Gastrocnemius medialis (tissue), 4 donors: ENCODE measurements at regions of chr17 and their contacts with region 1.

Region 1: DNA sequence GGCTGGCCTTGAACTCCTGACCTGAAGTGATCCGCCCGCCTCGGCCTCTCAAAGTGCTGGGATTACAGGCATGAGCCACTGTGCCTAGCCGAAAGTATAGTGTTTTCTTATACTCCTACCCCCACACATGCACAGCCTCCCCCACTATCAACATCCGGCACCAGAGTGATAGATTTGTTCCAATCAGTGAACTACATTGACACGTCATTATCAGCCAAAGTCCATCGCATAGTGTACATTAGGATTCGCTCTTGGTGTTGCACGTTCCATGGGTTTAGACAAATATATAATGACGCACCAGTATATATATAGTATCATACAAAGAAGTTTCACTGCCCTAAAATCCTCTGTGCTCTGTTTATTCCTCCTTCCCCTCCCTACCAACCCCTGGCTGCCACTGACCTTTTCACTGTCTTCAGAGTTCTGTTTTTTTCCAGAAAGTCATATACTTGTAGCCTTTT is 11.9 kb upstream of the TM4SF5 start:
- DNase-seq: no peak
- ATAC-seq: peak in 1 of 2 donors; percentile 30
- H3K4me3 ChIP-seq: no peak overlapping the region
- H3K27ac ChIP-seq: no peak overlapping the region
- H3K4me1 ChIP-seq: no peaks in the 10 kb centered on the region
- H3K27me3 ChIP-seq: peaks cover 2 to 5% (median 4%) of the 10 kb centered on the region in 3 donors
- CTCF ChIP-seq: no peak
- POLR2A ChIP-seq: no peak

Region 2: GRCh38 chr17:4678427-4679026 is 81.3 kb before region 1 on chr17:
- in situ Hi-C with region 1: no loop called
- intact Hi-C with region 1: loop called (anchors 10 kb)
- DNase-seq: no peak
- ATAC-seq: no peak
- H3K4me3 ChIP-seq: no peak overlapping the region
- H3K27ac ChIP-seq: no peak overlapping the region
- H3K4me1 ChIP-seq: no peaks in the 10 kb centered on the region
- H3K27me3 ChIP-seq: no peaks in the 10 kb centered on the region
- CTCF ChIP-seq: no peak
- POLR2A ChIP-seq: no peak

Region 3: GRCh38 chr17:4903051-4903818 is 143.4 kb after region 1 on chr17 and contains the start of gene CHRNE:
- in situ Hi-C with region 1: no loop called
- intact Hi-C with region 1: no loop called
- DNase-seq: peak; percentile 53 to 73
- ATAC-seq: peak; percentile 61 to 79
- H3K4me3 ChIP-seq: no peak within 1 kb of the TSS
- H3K27ac ChIP-seq: peak within 1 kb of the TSS; percentile 37 to 59 (median 50)
- H3K4me1 ChIP-seq: peaks cover 0 to 23% of the 10 kb centered on the region in 2 donors
- H3K27me3 ChIP-seq: peaks cover 0 to 18% (median 4%) of the 10 kb centered on the region in 3 donors
- CTCF ChIP-seq: peak; percentile 58 to 82 (median 74)
- POLR2A ChIP-seq: no peak
- total RNA-seq, gene CHRNE: 0.33 to 1.9 (median 0.52) TPM in 3 of 4 donors, not detected in the other